ENCODE measurements at regions of chr4 and their contacts with region 1.

Region 1: GRCh38 chr4:100299046-100299840 is 109.0 kb upstream of the DDIT4L start:
- DNase-seq: no peak
- ATAC-seq: peak in 1 of 4 donors; percentile 10
- H3K4me3 ChIP-seq: no peak overlapping the region
- H3K27ac ChIP-seq: peak overlapping the region; percentile 28
- H3K4me1 ChIP-seq: peaks cover 54% of the 10 kb centered on the region
- H3K27me3 ChIP-seq: no peaks in the 10 kb centered on the region
- CTCF ChIP-seq: no peak

Region 2: DNA sequence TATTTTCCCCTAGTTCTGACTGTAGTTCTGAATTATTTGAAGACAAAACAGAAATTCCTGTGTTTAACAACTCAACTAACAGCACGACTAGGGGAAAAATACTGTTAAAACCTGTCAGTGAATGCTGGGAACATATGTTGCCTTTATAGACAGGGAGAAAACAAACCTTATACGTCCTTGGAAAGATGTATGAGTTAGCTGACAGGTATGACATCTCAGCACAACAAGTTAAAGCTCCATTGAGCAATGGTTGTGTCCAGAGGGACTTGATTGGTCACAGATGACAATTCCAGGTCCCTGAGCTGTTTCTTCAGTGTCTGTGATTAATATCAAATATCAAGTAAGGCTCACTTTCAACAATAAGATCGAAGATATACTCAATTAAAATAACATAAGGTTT is 50.8 kb before region 1 on chr4:
- intact Hi-C with region 1: loop called (anchors 5 kb)
- DNase-seq: no peak
- ATAC-seq: peak; percentile 46 to 74 (median 64)
- H3K4me3 ChIP-seq: no peak overlapping the region
- H3K27ac ChIP-seq: peak overlapping the region; percentile 70
- H3K4me1 ChIP-seq: peaks cover 27% of the 10 kb centered on the region
- H3K27me3 ChIP-seq: no peaks in the 10 kb centered on the region
- CTCF ChIP-seq: no peak